Dendritic cell treated with granulocyte-macrophage colony-stimulating factor and Interleukin-4, amounts not matched to agents 40 ng/mL and 50 ng/mL, for 4 days (primary cell): ENCODE measurements at regions of chr17 and their contacts with region 1.

Region 1: GRCh38 chr17:57671667-57672632 is 73.1 kb downstream of the CCDC182 start:
- H3K4me3 Mint-ChIP-seq: no peak overlapping the region
- H3K27ac Mint-ChIP-seq: no peak overlapping the region
- H3K4me1 Mint-ChIP-seq: peaks cover 10% of the 10 kb centered on the region
- H3K27me3 Mint-ChIP-seq: no peaks in the 10 kb centered on the region

Region 2: GRCh38 chr17:57243171-57243948 is 428.6 kb before region 1 on chr17:
- intact Hi-C with region 1: loop called (anchors 1 kb)
- H3K4me3 Mint-ChIP-seq: no peak overlapping the region
- H3K27ac Mint-ChIP-seq: no peak overlapping the region
- H3K4me1 Mint-ChIP-seq: no peaks in the 10 kb centered on the region
- H3K27me3 Mint-ChIP-seq: peaks cover 4% of the 10 kb centered on the region

Region 3: DNA sequence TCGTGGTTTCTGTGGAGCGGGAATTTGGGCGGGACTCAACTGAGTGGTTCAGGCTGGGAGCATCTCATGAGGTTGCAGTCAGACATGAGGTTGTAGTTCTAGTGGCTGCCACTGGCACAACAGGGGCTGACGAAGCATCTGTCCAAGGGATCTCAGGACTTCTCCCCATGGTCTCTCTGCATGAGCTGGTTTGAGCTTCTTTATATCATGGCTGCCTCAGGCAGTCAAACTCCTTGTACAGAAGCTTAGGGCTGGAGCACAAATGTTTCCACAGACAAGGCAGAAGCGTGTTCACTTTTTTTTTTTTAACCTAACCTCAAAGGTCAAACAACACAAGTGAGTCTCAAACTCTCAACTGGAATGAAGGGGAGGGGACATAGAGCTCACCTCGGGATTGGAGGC is 172.3 kb before region 1 on chr17:
- intact Hi-C with region 1: no loop called
- H3K4me3 Mint-ChIP-seq: no peak overlapping the region
- H3K27ac Mint-ChIP-seq: no peak overlapping the region
- H3K4me1 Mint-ChIP-seq: peaks cover 7% of the 10 kb centered on the region
- H3K27me3 Mint-ChIP-seq: no peaks in the 10 kb centered on the region

Region 4: DNA sequence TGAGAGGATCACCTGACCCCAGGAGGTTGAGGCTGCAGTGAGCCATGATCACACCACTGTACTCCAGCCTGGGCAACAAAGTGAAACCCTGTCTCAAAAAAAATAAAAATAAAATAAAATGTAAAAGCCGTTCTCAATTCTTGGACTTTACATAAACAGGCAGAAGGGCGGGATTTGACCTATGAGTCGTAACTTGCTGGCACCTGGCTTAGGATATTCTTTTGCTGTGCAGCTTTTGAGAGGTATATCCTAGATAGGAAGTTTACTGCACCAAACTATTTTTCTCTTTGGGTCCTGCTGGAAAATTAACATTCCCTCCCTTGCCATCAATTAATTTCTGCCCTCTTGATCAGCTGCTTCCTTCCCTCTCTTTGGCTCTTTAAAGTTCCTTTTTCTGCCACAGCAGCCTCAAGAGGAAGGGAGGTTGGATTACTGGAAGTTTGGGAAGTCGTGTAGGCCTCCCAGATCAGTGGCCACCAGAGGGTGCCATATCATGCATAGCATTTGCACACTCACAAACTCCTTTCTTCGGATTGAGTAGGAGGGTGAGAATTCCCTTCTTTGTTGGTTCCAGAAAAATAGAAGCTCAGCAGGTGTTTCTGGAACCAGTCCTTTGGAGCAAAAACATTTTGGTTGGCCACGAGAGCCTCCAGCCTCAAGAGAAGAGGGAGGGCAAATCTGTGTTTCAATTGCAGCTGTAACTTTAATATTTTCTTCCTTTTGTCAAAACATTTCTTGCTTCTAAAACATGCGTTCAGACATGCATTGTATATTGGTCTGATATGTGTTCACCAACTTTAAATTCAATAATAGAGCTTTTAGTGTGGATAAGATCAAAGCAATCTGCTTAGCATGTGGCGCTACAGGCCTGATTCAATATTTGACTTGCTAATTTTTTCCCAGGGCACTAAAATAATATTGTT is 74.2 kb before region 1 on chr17:
- intact Hi-C with region 1: loop called (anchors 1 kb)
- H3K4me3 Mint-ChIP-seq: no peak overlapping the region
- H3K27ac Mint-ChIP-seq: no peak overlapping the region
- H3K4me1 Mint-ChIP-seq: peaks cover 39% of the 10 kb centered on the region
- H3K27me3 Mint-ChIP-seq: no peaks in the 10 kb centered on the region

Region 5: GRCh38 chr17:57724026-57724728 is 52.2 kb after region 1 on chr17:
- intact Hi-C with region 1: no loop called
- H3K4me3 Mint-ChIP-seq: no peak overlapping the region
- H3K27ac Mint-ChIP-seq: no peak overlapping the region
- H3K4me1 Mint-ChIP-seq: peaks cover 13% of the 10 kb centered on the region
- H3K27me3 Mint-ChIP-seq: peaks cover under 1% of the 10 kb centered on the region

Region 6: GRCh38 chr17:57838857-57839570 is 167.1 kb after region 1 on chr17:
- intact Hi-C with region 1: no loop called
- H3K4me3 Mint-ChIP-seq: no peak overlapping the region
- H3K27ac Mint-ChIP-seq: no peak overlapping the region
- H3K4me1 Mint-ChIP-seq: no peaks in the 10 kb centered on the region
- H3K27me3 Mint-ChIP-seq: no peaks in the 10 kb centered on the region